ENCODE measurements at regions of chr19 and their contacts with region 1.

Region 1: GRCh38 chr19:46788262-46788967 is at the start of gene SLC1A5:
- DNase-seq: peak; percentile 98 to 99
- ATAC-seq: peak; percentile 93
- H3K4me3 ChIP-seq: peak within 1 kb of the TSS; percentile 7 to 49
- H3K27ac ChIP-seq: peak within 1 kb of the TSS in 1 of 2 donors; percentile 43
- H3K4me1 ChIP-seq: no peaks in the 10 kb centered on the region
- H3K27me3 ChIP-seq: no peaks in the 10 kb centered on the region
- total RNA-seq, gene SLC1A5: 42.8 to 56.3 TPM

Region 2: DNA sequence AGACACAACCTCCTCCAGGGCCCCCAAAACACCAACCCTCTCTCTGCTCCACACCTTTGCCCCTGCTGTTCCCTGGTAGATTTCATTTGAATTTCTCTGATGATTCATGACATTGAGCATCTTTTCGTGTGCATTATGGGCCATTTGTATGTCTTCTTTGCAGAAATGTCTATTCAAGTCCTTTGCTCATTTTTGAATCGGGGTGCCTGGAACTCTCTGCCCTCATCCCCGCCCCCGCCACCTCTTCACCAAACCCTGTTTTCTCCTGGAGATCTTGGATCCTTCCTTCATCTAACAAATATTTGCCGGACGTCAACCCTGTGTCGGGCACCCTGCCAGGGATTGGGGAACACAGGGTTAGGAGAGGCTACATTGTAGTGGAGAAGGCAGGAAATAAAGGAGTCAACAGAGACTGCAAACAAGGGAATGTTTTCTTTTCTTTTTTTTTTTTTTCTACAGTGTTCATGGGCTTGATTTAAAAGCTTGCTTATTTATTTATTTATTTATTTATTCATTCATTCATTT is 25.5 kb after region 1 on chr19:
- intact Hi-C with region 1: loop called in 1 of 2 experiments (anchors 1 kb)
- DNase-seq: peak; percentile 74 to 93
- ATAC-seq: peak; percentile 81
- H3K4me3 ChIP-seq: no peak overlapping the region
- H3K27ac ChIP-seq: peak overlapping the region in 1 of 2 donors; percentile 94
- H3K4me1 ChIP-seq: no peaks in the 10 kb centered on the region
- H3K27me3 ChIP-seq: no peaks in the 10 kb centered on the region